Activated B cell treated with CpG ODN at 0.5 μM for 24 hours (primary cell): ENCODE measurements at regions of chr1 and their contacts with region 1.

Region 1: DNA sequence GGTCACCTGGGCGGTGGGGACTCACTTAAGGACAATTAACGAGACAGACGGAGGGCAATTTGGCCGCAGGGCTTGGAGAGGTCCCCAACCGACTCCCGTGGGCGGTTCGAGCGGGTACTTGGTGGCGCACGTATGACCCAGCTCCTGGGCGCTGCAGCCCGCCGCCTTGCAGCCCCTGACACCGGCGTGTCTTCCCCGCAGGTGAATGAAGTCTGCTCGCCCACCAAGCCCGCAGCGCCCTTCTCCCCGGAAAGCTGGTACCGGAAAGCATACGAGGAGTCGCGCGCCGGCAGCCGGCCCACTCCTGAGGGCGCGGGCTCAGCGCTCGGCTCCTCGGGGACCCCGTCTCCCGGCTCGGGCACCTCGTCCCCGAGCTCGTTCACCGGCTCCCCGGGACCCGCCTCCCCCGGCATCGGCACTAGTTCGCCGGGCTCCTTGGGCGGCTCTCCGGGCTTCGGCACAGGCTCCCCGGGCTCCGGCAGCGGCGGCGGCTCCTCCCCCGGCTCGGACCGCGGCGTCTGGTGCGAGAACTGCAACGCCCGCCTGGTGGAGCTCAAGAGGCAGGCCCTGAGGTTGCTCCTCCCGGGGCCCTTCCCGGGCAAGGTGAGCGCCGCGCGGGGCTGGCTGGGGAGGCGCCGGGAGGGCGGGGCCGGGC is 1.4 kb downstream of the KIF26B start:
- DNase-seq: peak; percentile 72
- ATAC-seq: peak; percentile 93
- H3K4me3 Mint-ChIP-seq: peak overlapping the region; percentile 79
- H3K27ac Mint-ChIP-seq: no peak overlapping the region
- H3K4me1 Mint-ChIP-seq: peaks cover 28% of the 10 kb centered on the region
- H3K27me3 Mint-ChIP-seq: peaks cover 36% of the 10 kb centered on the region
- CTCF ChIP-seq: no peak

Region 2: DNA sequence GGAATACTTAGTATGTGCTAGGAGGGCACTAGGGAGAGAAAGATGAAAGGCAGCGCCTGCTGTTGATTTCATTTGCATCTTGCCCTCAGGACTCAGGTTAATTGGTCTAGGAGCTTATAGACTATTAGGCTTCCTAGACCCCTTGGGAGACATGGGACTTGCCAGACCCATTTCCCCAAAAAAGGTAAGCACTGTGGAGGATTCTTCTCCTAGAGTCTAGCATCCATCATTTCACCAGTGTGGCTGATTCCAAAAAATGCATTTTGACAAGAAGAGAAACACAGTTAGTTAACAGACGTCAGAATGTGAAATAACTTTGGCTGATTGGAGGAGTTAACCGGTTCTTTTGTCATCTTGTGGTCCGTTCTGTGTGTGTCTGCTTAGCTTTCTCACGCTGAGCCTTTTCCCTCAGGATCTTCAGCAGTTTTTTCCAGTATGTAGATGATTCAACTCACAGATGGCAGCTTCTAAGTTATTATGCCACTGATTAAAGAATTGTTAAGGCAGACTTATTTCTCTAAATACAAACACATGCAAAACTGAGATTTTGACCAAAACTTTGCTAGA is 107.4 kb after region 1 on chr1:
- CTCF ChIA-PET with region 1: no interaction called
- POLR2A ChIA-PET with region 1: no interaction called
- intact Hi-C with region 1: no loop called
- DNase-seq: no peak
- ATAC-seq: no peak
- H3K4me3 Mint-ChIP-seq: no peak overlapping the region
- H3K27ac Mint-ChIP-seq: no peak overlapping the region
- H3K4me1 Mint-ChIP-seq: peaks cover 3% of the 10 kb centered on the region
- H3K27me3 Mint-ChIP-seq: peaks cover 4% of the 10 kb centered on the region
- CTCF ChIP-seq: no peak

Region 3: DNA sequence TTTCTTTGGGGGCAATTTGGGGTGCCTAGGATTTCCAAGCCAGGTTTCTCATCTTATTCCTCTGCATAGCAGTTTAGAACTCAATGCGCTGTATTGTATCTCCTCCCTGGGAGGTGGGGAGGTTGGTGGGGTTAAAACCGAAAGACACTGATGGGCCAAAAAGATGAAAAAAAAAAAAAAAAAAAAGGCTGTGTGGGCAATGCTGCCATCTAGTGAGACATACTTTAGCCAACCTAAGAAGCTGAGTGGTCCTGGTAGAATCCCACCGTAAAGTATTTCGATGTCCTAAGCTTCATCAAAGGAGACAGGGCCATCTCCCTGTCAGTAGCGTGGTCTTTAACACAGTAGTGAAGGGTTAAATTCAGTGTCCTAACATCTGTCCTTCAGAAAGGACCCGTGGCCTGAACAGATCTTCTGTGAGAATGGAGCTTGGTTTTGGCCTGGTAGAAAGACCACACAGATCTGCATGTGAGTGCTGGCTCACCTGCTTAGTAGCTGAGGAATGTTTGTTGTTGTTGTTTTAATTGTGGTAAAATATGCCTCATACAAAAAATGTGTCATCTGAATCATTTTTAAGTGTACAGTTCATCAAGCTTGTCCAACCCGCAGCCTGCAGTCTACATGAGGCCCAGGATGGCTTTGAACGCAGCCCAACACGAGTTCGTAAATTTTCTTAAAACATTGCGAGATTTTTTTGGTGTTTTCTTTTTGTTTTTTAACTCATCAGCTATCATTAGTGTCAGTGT is 224.8 kb after region 1 on chr1:
- CTCF ChIA-PET with region 1: interaction called, 5 read pairs
- POLR2A ChIA-PET with region 1: no interaction called
- intact Hi-C with region 1: loop called (anchors 2 kb)
- DNase-seq: no peak
- ATAC-seq: no peak
- H3K4me3 Mint-ChIP-seq: no peak overlapping the region
- H3K27ac Mint-ChIP-seq: no peak overlapping the region
- H3K4me1 Mint-ChIP-seq: no peaks in the 10 kb centered on the region
- H3K27me3 Mint-ChIP-seq: peaks cover 5% of the 10 kb centered on the region
- CTCF ChIP-seq: no peak

Region 4: GRCh38 chr1:246002725-246003441 is 846.7 kb after region 1 on chr1:
- CTCF ChIA-PET with region 1: interaction called, 74 read pairs
- POLR2A ChIA-PET with region 1: no interaction called
- intact Hi-C with region 1: loop called (anchors 1 kb)
- DNase-seq: peak; percentile 70
- ATAC-seq: peak; percentile 76
- H3K4me3 Mint-ChIP-seq: no peak overlapping the region
- H3K27ac Mint-ChIP-seq: no peak overlapping the region
- H3K4me1 Mint-ChIP-seq: peaks cover 7% of the 10 kb centered on the region
- H3K27me3 Mint-ChIP-seq: no peaks in the 10 kb centered on the region
- CTCF ChIP-seq: peak; percentile 80

Region 5: DNA sequence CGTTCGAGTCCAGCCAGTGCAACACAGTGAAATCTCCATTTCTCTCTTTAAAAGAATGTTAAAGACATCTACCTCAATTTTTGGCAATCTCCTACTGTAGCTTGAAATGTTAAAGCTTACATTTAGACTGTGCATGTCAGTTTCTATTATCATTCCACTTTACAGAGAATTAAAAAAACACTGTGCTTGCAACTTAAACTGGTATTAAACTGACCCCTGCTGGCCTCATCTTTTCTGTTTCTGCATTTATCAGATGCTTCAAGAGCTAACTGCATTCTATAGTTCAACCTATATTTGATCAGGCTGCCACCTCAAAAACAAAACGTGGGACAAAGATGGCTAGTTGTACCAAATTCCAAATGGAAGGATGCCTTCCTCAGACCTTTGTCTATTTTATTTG is 1124.3 kb after region 1 on chr1:
- CTCF ChIA-PET with region 1: interaction called, 7 read pairs
- POLR2A ChIA-PET with region 1: no interaction called
- intact Hi-C with region 1: loop called (anchors 1 kb)
- DNase-seq: no peak
- ATAC-seq: no peak
- H3K4me3 Mint-ChIP-seq: no peak overlapping the region
- H3K27ac Mint-ChIP-seq: no peak overlapping the region
- H3K4me1 Mint-ChIP-seq: no peaks in the 10 kb centered on the region
- H3K27me3 Mint-ChIP-seq: no peaks in the 10 kb centered on the region
- CTCF ChIP-seq: no peak

Region 6: DNA sequence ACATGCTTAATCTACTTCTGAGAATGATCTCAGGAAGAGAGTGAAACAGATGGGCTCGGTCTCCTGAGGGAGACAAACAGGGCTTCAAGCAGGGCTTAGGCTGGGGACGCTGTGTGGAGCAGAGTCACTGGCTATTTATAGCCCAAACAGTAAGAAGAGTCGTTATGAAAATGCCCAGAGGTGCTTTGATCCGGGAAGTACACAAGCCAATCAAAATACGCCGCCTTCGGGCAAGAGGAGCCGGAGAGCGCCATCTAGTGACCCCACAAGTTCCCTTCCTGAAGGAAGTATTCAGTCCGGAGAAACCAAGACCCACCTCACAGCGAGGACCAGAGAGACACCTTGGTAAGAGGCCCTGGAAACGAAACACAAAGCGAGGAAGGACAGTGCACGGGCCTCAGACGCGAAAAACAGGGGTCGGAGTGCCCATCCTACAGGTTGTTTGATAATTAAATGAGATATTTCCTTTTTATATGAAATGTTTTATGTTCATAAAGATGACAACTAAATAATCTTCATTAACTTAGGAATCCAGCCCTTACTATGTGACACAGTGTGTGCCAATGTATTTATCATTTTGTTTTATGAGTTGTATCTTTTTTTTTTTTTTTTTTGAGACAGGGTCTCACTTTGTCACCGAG is 1543.0 kb after region 1 on chr1:
- CTCF ChIA-PET with region 1: no interaction called
- POLR2A ChIA-PET with region 1: no interaction called
- intact Hi-C with region 1: loop called (anchors 1 kb)
- DNase-seq: peak; percentile 62
- ATAC-seq: peak; percentile 90
- H3K4me3 Mint-ChIP-seq: peak overlapping the region; percentile 74
- H3K27ac Mint-ChIP-seq: peak overlapping the region; percentile 57
- H3K4me1 Mint-ChIP-seq: peaks cover 8% of the 10 kb centered on the region
- H3K27me3 Mint-ChIP-seq: no peaks in the 10 kb centered on the region
- CTCF ChIP-seq: no peak